PC-3 (cell line): ENCODE measurements at regions of chr2 and their contacts with region 1.

Region 1: DNA sequence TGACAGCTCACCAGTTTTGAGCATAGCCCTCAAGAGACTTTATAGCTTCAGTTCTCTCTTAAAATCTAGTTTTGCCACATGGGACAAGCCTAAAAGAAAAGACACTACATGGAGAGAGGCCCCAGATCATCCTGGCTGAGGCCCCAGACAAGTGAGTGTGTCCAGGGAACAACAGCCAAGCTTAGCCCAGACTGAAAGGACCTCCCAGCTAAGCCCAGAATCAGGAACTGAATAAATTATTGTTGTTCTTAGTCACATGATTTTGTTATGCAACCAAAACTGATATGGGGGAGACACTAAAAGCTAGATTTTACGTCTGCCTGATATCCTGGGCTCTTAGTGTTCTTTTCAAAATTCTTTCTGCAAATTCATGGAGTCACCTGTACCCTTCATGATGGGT is 29.3 kb upstream of the LBH start:
- DNase-seq: no peak
- ATAC-seq: no peak
- H3K4me3 ChIP-seq: no peak overlapping the region
- H3K27ac ChIP-seq: no peak overlapping the region
- H3K4me1 ChIP-seq: no peaks in the 10 kb centered on the region
- H3K27me3 ChIP-seq: peaks cover 35% of the 10 kb centered on the region; the same call in 1 of the 2 replicates
- CTCF ChIP-seq: no peak

Region 2: GRCh38 chr2:30127016-30127893 is 74.7 kb before region 1 on chr2:
- CTCF ChIA-PET with region 1: no interaction called
- POLR2A ChIA-PET with region 1: no interaction called
- intact Hi-C with region 1: no loop called
- DNase-seq: peak; percentile 65
- ATAC-seq: peak; percentile 91
- H3K4me3 ChIP-seq: no peak overlapping the region
- H3K27ac ChIP-seq: no peak overlapping the region
- H3K4me1 ChIP-seq: peaks cover 9% of the 10 kb centered on the region
- H3K27me3 ChIP-seq: no peaks in the 10 kb centered on the region
- CTCF ChIP-seq: no peak

Region 3: DNA sequence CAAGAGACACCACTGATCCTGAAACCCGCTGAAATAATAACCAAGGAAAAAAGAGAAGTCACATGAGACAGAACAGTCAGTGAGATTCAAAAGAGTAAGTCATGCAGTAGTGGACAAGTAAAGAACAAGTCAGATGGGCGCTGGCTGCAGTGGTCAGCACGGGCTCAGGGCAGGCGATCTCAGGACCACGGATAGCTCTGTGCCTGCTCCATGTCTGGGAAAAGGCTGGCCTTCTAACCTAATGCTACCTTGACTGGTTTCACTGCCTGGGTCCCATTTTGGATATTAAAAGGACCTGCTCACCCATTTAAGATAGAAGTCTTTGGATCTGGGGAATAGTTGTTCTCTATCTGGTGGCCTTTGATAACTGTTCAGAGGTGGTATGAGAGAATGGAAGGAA is 183.3 kb after region 1 on chr2:
- CTCF ChIA-PET with region 1: interaction called, 15 read pairs
- POLR2A ChIA-PET with region 1: no interaction called
- intact Hi-C with region 1: no loop called
- DNase-seq: peak; percentile 39
- ATAC-seq: peak; percentile 59
- H3K4me3 ChIP-seq: no peak overlapping the region
- H3K27ac ChIP-seq: no peak overlapping the region
- H3K4me1 ChIP-seq: no peaks in the 10 kb centered on the region
- H3K27me3 ChIP-seq: peaks cover 29% of the 10 kb centered on the region
- CTCF ChIP-seq: no peak